ENCODE measurements at regions of chr2 and their contacts with region 1.

Region 1: GRCh38 chr2:18560031-18560796 is at the start of gene RDH14:
- DNase-seq: peak; percentile 92
- ATAC-seq: peak; percentile 88
- H3K4me3 Mint-ChIP-seq: peak within 1 kb of the TSS; percentile 91
- H3K27ac Mint-ChIP-seq: peak within 1 kb of the TSS; percentile 95
- H3K4me1 Mint-ChIP-seq: peaks cover 25% of the 10 kb centered on the region
- H3K27me3 Mint-ChIP-seq: no peaks in the 10 kb centered on the region
- total RNA-seq, gene RDH14: 19.6 to 20.9 TPM

Region 2: DNA sequence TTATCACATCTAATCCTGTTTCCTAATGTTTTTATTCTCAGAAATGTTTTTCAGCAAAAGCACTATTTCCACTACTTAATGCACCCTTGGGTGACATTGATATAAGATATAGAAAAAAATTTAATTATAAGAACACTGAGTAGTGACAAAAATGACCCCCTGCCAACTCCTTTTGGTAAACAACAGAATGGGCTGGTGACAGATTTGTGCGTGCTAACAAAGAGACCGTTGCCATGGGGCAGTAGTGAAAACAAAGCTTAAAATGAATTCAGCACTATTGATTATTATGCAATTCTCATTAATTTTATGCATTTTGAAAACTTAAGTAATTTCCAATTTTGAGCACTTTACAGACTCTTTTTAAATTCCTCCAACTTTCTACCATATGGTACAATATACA is 32.9 kb before region 1 on chr2:
- POLR2A ChIA-PET with region 1: no interaction called
- DNase-seq: no peak
- ATAC-seq: no peak
- H3K4me3 Mint-ChIP-seq: no peak overlapping the region
- H3K27ac Mint-ChIP-seq: no peak overlapping the region
- H3K4me1 Mint-ChIP-seq: no peaks in the 10 kb centered on the region
- H3K27me3 Mint-ChIP-seq: no peaks in the 10 kb centered on the region

Region 3: GRCh38 chr2:18546567-18546966 is 13.6 kb before region 1 on chr2:
- POLR2A ChIA-PET with region 1: interaction called, 13 read pairs
- DNase-seq: no peak
- ATAC-seq: peak; percentile 73
- H3K4me3 Mint-ChIP-seq: peak overlapping the region; percentile 54
- H3K27ac Mint-ChIP-seq: peak overlapping the region; percentile 39
- H3K4me1 Mint-ChIP-seq: peaks cover 15% of the 10 kb centered on the region
- H3K27me3 Mint-ChIP-seq: no peaks in the 10 kb centered on the region

Region 4: DNA sequence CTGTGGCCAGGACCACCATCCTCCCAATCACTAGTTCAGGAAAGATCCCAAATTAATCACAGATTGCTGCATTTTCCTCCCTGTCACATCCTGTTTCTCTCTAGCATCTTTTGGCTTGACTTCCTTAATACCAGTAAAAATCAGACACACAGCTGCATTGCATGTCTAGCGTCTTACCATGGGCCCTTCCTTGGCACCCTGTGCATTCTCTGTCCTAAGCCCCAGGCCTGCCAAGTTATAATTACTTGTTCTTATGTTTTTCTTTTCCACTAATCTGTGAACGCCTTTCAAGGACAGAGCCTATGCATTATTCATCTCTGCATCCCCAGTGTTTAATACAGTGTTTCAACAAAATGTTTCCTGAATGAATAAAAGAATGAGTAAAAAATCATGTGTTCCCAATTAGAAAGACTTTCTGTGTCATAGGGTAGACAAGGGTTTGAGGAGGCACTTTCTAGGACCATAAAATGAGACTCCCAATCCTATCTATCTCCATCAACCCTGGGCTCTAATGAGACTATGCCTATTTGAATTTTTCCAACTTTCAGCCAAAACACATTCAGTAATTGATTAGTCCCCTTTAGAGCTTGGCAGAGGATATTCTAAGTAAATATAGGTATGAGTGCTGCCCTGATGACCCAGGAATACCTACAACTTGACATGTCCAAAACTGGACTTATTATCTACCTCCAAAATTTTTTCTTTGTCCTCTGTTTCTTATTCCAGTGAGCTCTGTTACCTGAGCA is 39.5 kb after region 1 on chr2:
- POLR2A ChIA-PET with region 1: interaction called, 24 read pairs
- DNase-seq: no peak
- ATAC-seq: no peak
- H3K4me3 Mint-ChIP-seq: no peak overlapping the region
- H3K27ac Mint-ChIP-seq: no peak overlapping the region
- H3K4me1 Mint-ChIP-seq: peaks cover 4% of the 10 kb centered on the region
- H3K27me3 Mint-ChIP-seq: no peaks in the 10 kb centered on the region

Region 5: GRCh38 chr2:18605115-18605514 is 44.9 kb after region 1 on chr2:
- POLR2A ChIA-PET with region 1: interaction called, 24 read pairs
- DNase-seq: no peak
- ATAC-seq: peak; percentile 100
- H3K4me3 Mint-ChIP-seq: peak overlapping the region; percentile 61
- H3K27ac Mint-ChIP-seq: peak overlapping the region; percentile 92
- H3K4me1 Mint-ChIP-seq: peaks cover 15% of the 10 kb centered on the region
- H3K27me3 Mint-ChIP-seq: no peaks in the 10 kb centered on the region

Region 6: DNA sequence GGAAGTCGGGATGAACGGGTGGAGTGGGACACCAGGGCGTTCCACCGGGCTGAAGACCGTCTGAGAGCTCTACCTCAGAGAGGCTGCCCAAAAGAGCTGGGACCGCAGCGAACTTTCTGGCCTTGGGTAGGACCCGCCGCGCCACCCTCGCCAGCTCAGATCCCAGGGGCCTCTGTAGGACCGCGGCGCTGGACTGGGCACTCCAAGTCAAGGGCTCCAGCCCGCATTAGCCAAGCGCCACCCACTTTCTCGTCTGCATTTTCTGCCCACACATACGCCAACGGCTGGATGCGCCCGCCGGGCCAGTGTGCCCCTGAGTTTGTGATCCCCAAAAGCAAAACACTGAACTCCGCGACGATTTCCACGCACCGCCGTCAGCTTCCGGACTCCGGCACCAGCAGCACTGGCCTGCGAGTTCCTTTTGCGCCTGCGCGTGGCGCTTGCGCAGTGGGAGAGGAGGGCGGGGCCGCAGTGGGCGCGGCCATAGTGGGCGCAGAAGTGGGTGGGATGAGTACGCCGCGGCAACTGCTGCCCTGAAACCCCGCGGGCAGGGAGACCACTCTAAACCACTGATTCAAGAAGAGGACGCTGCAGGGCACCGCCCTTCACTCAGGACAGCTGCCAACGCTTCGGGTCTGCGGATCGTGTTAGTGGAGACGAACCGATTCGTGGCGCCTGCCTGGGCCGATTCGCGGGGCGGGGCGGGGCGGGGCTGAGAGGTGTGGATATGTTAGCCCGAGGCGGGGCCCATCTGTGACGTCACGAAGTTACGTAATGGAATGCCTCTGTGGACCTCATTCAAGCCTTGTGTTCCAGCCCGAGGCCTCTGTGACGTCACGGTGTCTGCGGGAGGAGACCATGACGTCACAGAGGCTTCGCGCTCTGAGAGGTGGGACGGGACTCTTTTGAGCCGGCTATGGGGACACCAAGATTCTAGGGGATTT is 787.7 kb after region 1 on chr2:
- POLR2A ChIA-PET with region 1: interaction called, 18 read pairs
- DNase-seq: peak; percentile 100
- ATAC-seq: peak; percentile 92
- H3K4me3 Mint-ChIP-seq: peak overlapping the region; percentile 96
- H3K27ac Mint-ChIP-seq: peak overlapping the region; percentile 97
- H3K4me1 Mint-ChIP-seq: peaks cover 21% of the 10 kb centered on the region
- H3K27me3 Mint-ChIP-seq: peaks cover 34% of the 10 kb centered on the region

Region 7: GRCh38 chr2:19901442-19902215 is 1341.4 kb after region 1 on chr2 and contains the start of gene TTC32:
- POLR2A ChIA-PET with region 1: interaction called, 13 read pairs
- DNase-seq: peak; percentile 95
- ATAC-seq: peak; percentile 88
- H3K4me3 Mint-ChIP-seq: peak within 1 kb of the TSS; percentile 93
- H3K27ac Mint-ChIP-seq: peak within 1 kb of the TSS; percentile 96
- H3K4me1 Mint-ChIP-seq: peaks cover 28% of the 10 kb centered on the region
- H3K27me3 Mint-ChIP-seq: peaks cover 3% of the 10 kb centered on the region
- total RNA-seq, gene TTC32: 41.2 to 43.5 TPM